PC-9 (cell line): ENCODE measurements at regions of chr5 and their contacts with region 1.

Region 1: DNA sequence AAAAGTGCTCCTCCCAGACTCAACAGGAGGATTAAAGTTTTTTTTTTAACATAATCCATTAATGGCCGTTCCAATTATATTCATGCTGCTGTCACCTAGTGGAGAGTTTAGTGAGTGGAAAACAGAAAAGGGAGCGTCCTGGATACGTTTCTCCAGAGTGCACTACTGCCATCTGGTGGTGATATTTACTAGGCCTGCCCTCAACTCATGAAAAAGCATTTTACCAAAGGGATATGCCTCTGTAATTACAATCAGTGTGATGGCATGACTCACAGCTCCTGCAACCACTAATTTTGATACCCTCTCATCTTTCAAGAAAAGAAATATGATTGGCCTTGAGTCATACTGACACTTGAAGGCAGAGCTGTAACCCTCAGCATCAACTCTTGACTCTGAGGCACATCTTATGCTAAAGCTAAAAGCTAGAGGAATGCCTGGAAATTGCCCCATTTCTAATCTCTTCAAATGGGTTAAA is 20.0 kb downstream of the MINAR2 start:
- DNase-seq: peak; percentile 59 to 75
- H3K4me3 ChIP-seq: no peak overlapping the region
- H3K27ac ChIP-seq: no peak overlapping the region
- H3K4me1 ChIP-seq: no peaks in the 10 kb centered on the region
- H3K27me3 ChIP-seq: no peaks in the 10 kb centered on the region
- CTCF ChIP-seq: peak; percentile 91

Region 2: DNA sequence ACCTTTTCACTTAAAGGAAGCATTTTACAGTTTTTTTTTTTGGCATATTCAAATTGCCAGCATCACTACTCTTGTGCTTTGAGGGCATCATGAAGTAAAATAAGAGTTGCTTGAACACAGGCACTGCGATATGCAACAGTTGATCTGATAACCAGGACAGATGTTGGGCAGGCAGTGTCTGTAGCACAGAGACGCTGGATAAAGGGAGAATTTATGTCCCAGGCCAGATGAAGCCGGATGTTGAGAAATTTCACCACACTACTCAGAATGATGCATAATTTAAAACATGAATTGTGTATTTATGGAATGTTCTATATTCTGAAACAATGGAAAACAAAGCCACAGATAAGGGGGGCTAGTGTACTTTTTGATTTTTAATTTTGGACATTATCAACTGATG is 1613.0 kb before region 1 on chr5:
- CTCF ChIA-PET with region 1: no interaction called
- POLR2A ChIA-PET with region 1: no interaction called
- intact Hi-C with region 1: no loop called
- DNase-seq: no peak
- H3K4me3 ChIP-seq: no peak overlapping the region
- H3K27ac ChIP-seq: no peak overlapping the region
- H3K4me1 ChIP-seq: no peaks in the 10 kb centered on the region
- H3K27me3 ChIP-seq: no peaks in the 10 kb centered on the region
- CTCF ChIP-seq: no peak

Region 3: DNA sequence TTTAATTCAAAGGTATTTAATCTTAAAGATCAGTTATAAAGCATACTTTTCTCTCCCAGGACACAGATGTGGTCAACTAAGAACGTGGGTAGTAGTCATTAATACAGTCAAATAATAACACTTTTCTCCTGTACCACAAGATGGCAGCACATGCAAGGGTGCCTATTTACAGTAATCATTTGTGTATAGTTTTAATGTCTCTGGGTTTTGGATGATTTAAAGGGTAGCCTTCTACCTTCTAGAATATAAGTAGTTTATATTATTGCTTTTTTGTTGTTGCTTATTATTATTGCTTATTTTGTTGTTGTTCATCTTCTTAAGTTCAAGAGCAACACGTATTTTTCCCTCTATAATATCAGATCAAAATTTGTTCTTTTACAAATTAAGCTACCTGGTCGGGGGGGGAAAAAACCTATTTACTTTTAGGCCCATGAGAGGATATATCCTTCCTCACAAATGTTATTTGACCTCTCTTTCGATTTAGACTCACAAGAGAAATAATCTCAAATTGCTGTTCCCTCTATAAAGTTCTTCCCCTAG is 862.3 kb before region 1 on chr5:
- CTCF ChIA-PET with region 1: interaction called, 5 read pairs
- POLR2A ChIA-PET with region 1: no interaction called
- intact Hi-C with region 1: loop called (anchors 1 kb)
- DNase-seq: peak; percentile 10 to 48
- H3K4me3 ChIP-seq: no peak overlapping the region
- H3K27ac ChIP-seq: no peak overlapping the region
- H3K4me1 ChIP-seq: no peaks in the 10 kb centered on the region
- H3K27me3 ChIP-seq: no peaks in the 10 kb centered on the region
- CTCF ChIP-seq: peak; percentile 88

Region 4: GRCh38 chr5:129031886-129032669 is 735.9 kb before region 1 on chr5:
- CTCF ChIA-PET with region 1: no interaction called
- POLR2A ChIA-PET with region 1: no interaction called
- intact Hi-C with region 1: no loop called
- DNase-seq: no peak
- H3K4me3 ChIP-seq: no peak overlapping the region
- H3K27ac ChIP-seq: no peak overlapping the region
- H3K4me1 ChIP-seq: no peaks in the 10 kb centered on the region
- H3K27me3 ChIP-seq: no peaks in the 10 kb centered on the region
- CTCF ChIP-seq: no peak

Region 5: GRCh38 chr5:129361440-129362025 is 406.4 kb before region 1 on chr5:
- CTCF ChIA-PET with region 1: no interaction called
- POLR2A ChIA-PET with region 1: no interaction called
- intact Hi-C with region 1: loop called (anchors 1 kb)
- DNase-seq: no peak
- H3K4me3 ChIP-seq: no peak overlapping the region
- H3K27ac ChIP-seq: no peak overlapping the region
- H3K4me1 ChIP-seq: no peaks in the 10 kb centered on the region
- H3K27me3 ChIP-seq: no peaks in the 10 kb centered on the region
- CTCF ChIP-seq: peak; percentile 65

Region 6: GRCh38 chr5:129664337-129664937 is 103.5 kb before region 1 on chr5:
- CTCF ChIA-PET with region 1: no interaction called
- POLR2A ChIA-PET with region 1: no interaction called
- intact Hi-C with region 1: loop called (anchors 1 kb)
- DNase-seq: peak in 1 of 2 experiments; percentile 19
- H3K4me3 ChIP-seq: no peak overlapping the region
- H3K27ac ChIP-seq: no peak overlapping the region
- H3K4me1 ChIP-seq: no peaks in the 10 kb centered on the region
- H3K27me3 ChIP-seq: no peaks in the 10 kb centered on the region
- CTCF ChIP-seq: peak; percentile 88

Region 7: DNA sequence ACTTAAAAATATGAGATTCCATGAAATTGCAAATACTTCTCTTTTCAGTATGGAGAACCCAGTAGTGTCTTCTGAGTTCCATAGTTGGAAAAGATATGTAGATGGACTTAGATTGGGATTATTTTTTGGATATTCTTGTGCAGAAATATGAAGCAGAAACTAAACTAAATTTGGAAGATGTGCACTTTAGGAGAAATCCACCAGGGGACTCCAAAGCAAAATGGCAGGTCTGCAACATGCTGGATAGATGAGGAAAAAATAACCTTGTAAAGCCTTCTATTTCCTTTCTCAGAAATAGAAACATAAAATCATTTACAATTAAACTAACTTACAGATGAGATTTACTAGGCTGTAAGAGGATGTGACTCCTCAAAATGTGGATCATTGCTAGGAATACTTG is 69.3 kb before region 1 on chr5:
- CTCF ChIA-PET with region 1: no interaction called
- POLR2A ChIA-PET with region 1: no interaction called
- intact Hi-C with region 1: no loop called
- DNase-seq: no peak
- H3K4me3 ChIP-seq: no peak overlapping the region
- H3K27ac ChIP-seq: no peak overlapping the region
- H3K4me1 ChIP-seq: no peaks in the 10 kb centered on the region
- H3K27me3 ChIP-seq: no peaks in the 10 kb centered on the region
- CTCF ChIP-seq: no peak

Region 8: GRCh38 chr5:129844764-129845163 is 76.8 kb after region 1 on chr5:
- CTCF ChIA-PET with region 1: no interaction called
- POLR2A ChIA-PET with region 1: no interaction called
- intact Hi-C with region 1: no loop called
- DNase-seq: no peak
- H3K4me3 ChIP-seq: no peak overlapping the region
- H3K27ac ChIP-seq: no peak overlapping the region
- H3K4me1 ChIP-seq: no peaks in the 10 kb centered on the region
- H3K27me3 ChIP-seq: no peaks in the 10 kb centered on the region
- CTCF ChIP-seq: no peak

Region 9: DNA sequence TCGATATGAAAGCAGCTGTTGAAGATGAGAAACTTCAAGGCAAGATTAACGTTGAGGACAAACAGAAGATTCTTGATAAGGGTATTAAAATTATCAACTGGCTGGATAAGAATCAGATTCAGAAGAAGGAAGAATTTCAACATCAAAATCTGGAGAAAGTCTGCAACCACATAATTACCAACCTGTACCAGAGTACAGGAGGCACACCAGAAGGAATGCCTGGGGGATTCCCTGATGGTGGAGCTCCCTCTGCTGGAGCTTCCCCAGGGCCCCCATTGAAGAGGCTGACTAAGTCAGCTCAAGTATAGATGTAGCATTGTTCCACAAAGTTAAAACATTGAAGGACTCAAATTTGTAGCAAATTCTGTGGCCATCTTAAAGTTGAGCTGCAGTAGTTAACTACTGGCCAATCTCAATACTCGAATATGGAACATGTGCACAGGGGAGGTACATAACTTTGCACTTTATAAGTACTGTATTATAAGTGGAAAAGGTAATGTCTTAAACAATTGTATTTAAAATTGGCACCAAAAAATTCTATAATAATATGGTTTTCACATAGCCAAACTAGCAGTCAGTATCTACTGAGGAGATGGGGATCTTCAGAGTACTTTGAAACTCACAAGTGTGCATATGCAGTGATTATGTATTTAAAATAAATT is 373.8 kb after region 1 on chr5:
- CTCF ChIA-PET with region 1: no interaction called
- POLR2A ChIA-PET with region 1: no interaction called
- intact Hi-C with region 1: loop called (anchors 1 kb)
- DNase-seq: peak in 1 of 2 experiments; percentile 16
- H3K4me3 ChIP-seq: no peak overlapping the region
- H3K27ac ChIP-seq: no peak overlapping the region
- H3K4me1 ChIP-seq: no peaks in the 10 kb centered on the region
- H3K27me3 ChIP-seq: no peaks in the 10 kb centered on the region
- CTCF ChIP-seq: peak; percentile 59

Region 10: GRCh38 chr5:131109540-131110255 is 1341.8 kb after region 1 on chr5:
- CTCF ChIA-PET with region 1: no interaction called
- POLR2A ChIA-PET with region 1: no interaction called
- intact Hi-C with region 1: loop called (anchors 1 kb)
- DNase-seq: peak in 1 of 2 experiments; percentile 11
- H3K4me3 ChIP-seq: no peak overlapping the region
- H3K27ac ChIP-seq: no peak overlapping the region
- H3K4me1 ChIP-seq: no peaks in the 10 kb centered on the region
- H3K27me3 ChIP-seq: no peaks in the 10 kb centered on the region
- CTCF ChIP-seq: peak; percentile 86